Activated CD4-positive, alpha-beta T cell treated with anti-CD3 and anti-CD28 coated beads for 36 hours (primary cell): ENCODE measurements at regions of chr4 and their contacts with region 1.

Region 1: GRCh38 chr4:101419324-101420135 is 72.2 kb upstream of the PPP3CA start:
- DNase-seq: peak; percentile 8
- ATAC-seq: peak; percentile 63
- H3K4me3 Mint-ChIP-seq: no peak overlapping the region
- H3K27ac Mint-ChIP-seq: no peak overlapping the region
- H3K4me1 Mint-ChIP-seq: peaks cover 39% of the 10 kb centered on the region
- H3K27me3 Mint-ChIP-seq: peaks cover 41% of the 10 kb centered on the region

Region 2: DNA sequence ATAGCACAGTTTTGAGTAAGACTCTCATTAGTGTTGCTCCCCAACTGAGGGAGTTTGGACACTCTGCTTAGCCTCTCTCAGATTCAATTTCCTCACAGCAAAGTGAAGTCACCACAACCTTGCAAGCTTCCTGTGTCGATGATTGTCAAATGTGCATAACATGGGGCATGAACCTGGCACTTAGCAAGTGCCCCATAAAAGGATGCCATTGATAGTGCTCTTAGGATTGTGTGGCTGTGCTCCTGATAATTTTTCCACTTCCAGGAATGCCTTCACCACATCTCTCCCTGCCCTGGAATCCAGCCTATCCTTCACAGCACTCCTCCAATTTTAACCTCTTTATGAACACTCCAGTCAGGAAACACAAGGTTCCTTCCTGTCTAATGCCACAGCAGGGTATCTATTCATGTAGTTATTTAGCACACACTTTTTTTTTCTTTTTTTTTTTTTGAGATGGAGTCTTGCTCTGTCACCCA is 381.6 kb before region 1 on chr4:
- CTCF ChIA-PET with region 1: no interaction called
- POLR2A ChIA-PET with region 1: no interaction called
- intact Hi-C with region 1: loop called in 1 of 2 experiments (anchors 5 kb)
- DNase-seq: peak; percentile 23
- ATAC-seq: peak; percentile 67
- H3K4me3 Mint-ChIP-seq: no peak overlapping the region
- H3K27ac Mint-ChIP-seq: no peak overlapping the region
- H3K4me1 Mint-ChIP-seq: peaks cover 24% of the 10 kb centered on the region
- H3K27me3 Mint-ChIP-seq: no peaks in the 10 kb centered on the region

Region 3: GRCh38 chr4:101205916-101206315 is 213.6 kb before region 1 on chr4:
- CTCF ChIA-PET with region 1: no interaction called
- POLR2A ChIA-PET with region 1: no interaction called
- intact Hi-C with region 1: loop called in 1 of 2 experiments (anchors 1 kb)
- DNase-seq: peak; percentile 57
- ATAC-seq: peak; percentile 99
- H3K4me3 Mint-ChIP-seq: no peak overlapping the region
- H3K27ac Mint-ChIP-seq: no peak overlapping the region
- H3K4me1 Mint-ChIP-seq: peaks cover 29% of the 10 kb centered on the region
- H3K27me3 Mint-ChIP-seq: peaks cover 2% of the 10 kb centered on the region

Region 4: DNA sequence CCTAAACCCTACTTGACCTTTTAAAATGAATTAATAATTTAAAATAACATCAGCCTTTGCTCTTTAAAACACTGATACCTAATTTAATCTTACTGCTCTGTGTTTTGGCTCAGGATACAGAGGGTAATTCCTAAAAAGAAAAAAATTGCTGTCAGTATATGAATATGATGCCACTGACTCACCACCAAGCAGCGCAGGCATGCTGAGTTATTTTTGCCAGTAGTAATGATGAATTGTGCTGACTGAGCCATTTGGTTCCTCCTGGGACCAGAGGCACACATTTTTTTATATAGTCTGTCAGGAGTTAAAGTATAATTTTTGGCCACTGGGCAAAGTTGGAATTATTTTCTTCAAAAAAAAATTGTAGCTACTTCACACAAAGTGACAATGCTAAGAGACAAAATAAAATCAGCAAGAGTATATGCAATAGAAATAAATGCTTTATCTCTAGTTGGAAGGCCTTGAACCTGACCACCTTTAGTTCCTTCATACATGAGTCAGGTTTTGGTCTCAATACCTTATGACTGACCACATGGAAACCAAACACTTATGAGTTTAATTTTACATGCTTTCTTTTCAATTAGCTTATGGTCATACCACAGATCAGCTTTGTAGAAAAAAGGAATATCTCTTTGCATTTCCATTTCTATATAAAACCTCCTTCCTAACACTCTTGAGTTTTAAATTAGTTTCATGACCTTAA is 187.3 kb before region 1 on chr4:
- CTCF ChIA-PET with region 1: no interaction called
- POLR2A ChIA-PET with region 1: no interaction called
- intact Hi-C with region 1: no loop called
- DNase-seq: peak; percentile 53
- ATAC-seq: peak; percentile 95
- H3K4me3 Mint-ChIP-seq: no peak overlapping the region
- H3K27ac Mint-ChIP-seq: no peak overlapping the region
- H3K4me1 Mint-ChIP-seq: peaks cover 29% of the 10 kb centered on the region
- H3K27me3 Mint-ChIP-seq: no peaks in the 10 kb centered on the region

Region 5: GRCh38 chr4:101527188-101527587 is 107.7 kb after region 1 on chr4:
- CTCF ChIA-PET with region 1: interaction called, 3 read pairs
- POLR2A ChIA-PET with region 1: interaction called, 3 read pairs
- intact Hi-C with region 1: loop called (anchors 1 kb)
- DNase-seq: peak; percentile 84
- ATAC-seq: peak; percentile 100
- H3K4me3 Mint-ChIP-seq: no peak overlapping the region
- H3K27ac Mint-ChIP-seq: no peak overlapping the region
- H3K4me1 Mint-ChIP-seq: peaks cover 19% of the 10 kb centered on the region
- H3K27me3 Mint-ChIP-seq: peaks cover 47% of the 10 kb centered on the region